ENCODE measurements at regions of chr15 and their contacts with region 1.

Region 1: DNA sequence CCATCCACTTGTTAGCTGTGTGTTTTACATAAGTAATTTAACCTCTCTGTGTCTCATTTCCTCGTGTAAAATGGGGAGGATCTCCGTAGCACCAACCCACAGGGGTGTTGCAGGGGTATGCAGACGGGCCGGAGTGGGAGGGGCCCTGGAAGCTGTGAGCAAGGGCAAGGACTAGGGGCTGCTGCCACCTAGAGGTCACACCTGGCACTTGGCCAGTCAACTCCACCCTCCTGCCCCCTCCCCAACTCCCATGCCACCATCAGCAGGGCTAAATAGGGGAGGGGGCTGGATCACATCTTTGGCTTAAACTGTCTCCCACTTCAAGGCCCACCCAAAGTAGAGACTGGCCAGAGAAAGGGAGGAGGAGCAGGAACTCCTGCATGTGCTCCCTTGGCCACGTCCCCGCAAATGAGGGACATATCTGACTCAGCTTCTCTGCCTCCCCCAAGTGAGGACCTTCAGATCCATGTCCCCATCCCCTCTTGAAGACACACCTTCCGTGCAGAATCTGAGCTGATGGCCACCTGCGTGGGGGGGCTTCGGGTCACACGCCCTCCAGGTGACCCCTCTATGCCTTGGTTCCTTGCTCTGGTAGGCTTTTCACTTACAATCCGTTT is 2.6 kb downstream of the CCDC9B start:
- DNase-seq: peak; percentile 95
- H3K4me3 ChIP-seq: peak overlapping the region; percentile 51 to 77; a peak in 2 of 4 replicates
- H3K27ac ChIP-seq: peak overlapping the region; percentile 96 to 98; a peak in 3 of 4 replicates
- H3K4me1 ChIP-seq: peaks cover 56 to 62% of the 10 kb centered on the region in 2 experiments; a peak in 3 of 4 replicates
- H3K27me3 ChIP-seq: no peaks in the 10 kb centered on the region
- CTCF ChIP-seq: peak; percentile 89
- EP300 ChIP-seq: no peak
- RAD21 ChIP-seq: peak; percentile 81

Region 2: GRCh38 chr15:40323239-40323952 is 14.8 kb before region 1 on chr15 and contains the start of gene INAFM2:
- CTCF ChIA-PET with region 1: interaction called, 2,194 read pairs
- POLR2A ChIA-PET with region 1: interaction called, 10 read pairs
- DNase-seq: peak; percentile 98
- H3K4me3 ChIP-seq: peak within 1 kb of the TSS; percentile 70 to 73
- H3K27ac ChIP-seq: peak within 1 kb of the TSS in 1 of 2 experiments; percentile 43; a peak in 1 of 4 replicates
- H3K4me1 ChIP-seq: peaks cover 20 to 23% of the 10 kb centered on the region in 2 experiments; a peak in 3 of 4 replicates
- H3K27me3 ChIP-seq: no peaks in the 10 kb centered on the region
- CTCF ChIP-seq: peak; percentile 60
- EP300 ChIP-seq: no peak
- RAD21 ChIP-seq: peak; percentile 20
- polyA plus RNA-seq, gene INAFM2: 7.8 and 9.8 TPM in 2 replicates

Region 3: DNA sequence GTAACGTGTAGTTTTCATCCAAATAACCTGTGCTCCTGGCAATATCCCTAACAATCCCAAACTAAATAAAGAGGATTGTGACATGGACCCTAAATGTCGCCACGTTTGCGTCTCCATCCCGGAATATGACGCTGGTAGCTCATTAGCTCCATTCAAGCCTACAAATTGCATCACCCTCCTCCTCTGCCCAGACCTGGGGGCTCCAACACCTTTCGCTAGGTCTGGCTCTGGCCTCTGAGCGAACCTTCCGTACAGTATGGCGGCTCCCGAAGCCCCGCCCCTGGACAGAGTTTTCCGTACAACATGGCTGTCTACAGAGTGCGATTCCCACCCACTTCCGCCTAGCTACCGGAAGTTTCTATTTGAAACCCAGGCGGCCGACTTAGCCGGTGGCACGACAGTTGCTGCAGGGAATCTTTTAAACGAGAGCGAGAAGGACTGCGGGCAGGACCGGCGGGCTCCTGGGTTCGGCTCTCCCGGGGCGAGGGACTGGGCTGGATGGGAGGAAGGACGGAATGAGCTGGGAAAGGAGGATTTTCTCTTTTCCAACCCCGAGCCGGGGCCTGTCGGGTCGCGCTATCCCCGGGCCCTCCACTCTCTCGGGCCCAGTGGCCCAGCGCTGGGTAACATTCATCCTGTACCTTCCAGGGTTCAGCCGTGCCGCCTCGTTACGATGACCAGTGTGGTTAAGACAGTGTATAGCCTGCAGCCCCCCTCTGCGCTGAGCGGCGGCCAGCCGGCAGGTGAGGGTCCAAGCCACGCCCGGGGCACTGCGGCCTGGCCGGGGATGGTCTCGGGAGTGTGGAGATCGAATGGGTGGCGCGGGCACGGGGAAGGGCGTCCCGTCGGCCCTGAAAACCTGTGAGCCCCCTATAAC is 44.7 kb after region 1 on chr15 and contains the start of gene KNSTRN:
- CTCF ChIA-PET with region 1: interaction called, 12 read pairs
- POLR2A ChIA-PET with region 1: interaction called, 7 read pairs
- DNase-seq: peak; percentile 95
- H3K4me3 ChIP-seq: peak within 1 kb of the TSS; percentile 77 to 93
- H3K27ac ChIP-seq: peak within 1 kb of the TSS; percentile 20 to 66; a peak in 3 of 4 replicates
- H3K4me1 ChIP-seq: peaks cover 7 to 17% of the 10 kb centered on the region in 2 experiments; a peak in 3 of 4 replicates
- H3K27me3 ChIP-seq: no peaks in the 10 kb centered on the region
- CTCF ChIP-seq: no peak
- EP300 ChIP-seq: no peak
- RAD21 ChIP-seq: no peak
- polyA plus RNA-seq, gene KNSTRN: 25.5 and 29.5 TPM in 2 replicates

Region 4: GRCh38 chr15:40388946-40389841 is 51.0 kb after region 1 on chr15:
- CTCF ChIA-PET with region 1: interaction called, 14 read pairs
- POLR2A ChIA-PET with region 1: interaction called, 3 read pairs
- DNase-seq: no peak
- H3K4me3 ChIP-seq: no peak overlapping the region
- H3K27ac ChIP-seq: no peak overlapping the region
- H3K4me1 ChIP-seq: peaks cover 3 to 6% of the 10 kb centered on the region in 2 experiments; a peak in 1 of 4 replicates
- H3K27me3 ChIP-seq: no peaks in the 10 kb centered on the region
- CTCF ChIP-seq: no peak
- EP300 ChIP-seq: no peak
- RAD21 ChIP-seq: no peak

Region 5: DNA sequence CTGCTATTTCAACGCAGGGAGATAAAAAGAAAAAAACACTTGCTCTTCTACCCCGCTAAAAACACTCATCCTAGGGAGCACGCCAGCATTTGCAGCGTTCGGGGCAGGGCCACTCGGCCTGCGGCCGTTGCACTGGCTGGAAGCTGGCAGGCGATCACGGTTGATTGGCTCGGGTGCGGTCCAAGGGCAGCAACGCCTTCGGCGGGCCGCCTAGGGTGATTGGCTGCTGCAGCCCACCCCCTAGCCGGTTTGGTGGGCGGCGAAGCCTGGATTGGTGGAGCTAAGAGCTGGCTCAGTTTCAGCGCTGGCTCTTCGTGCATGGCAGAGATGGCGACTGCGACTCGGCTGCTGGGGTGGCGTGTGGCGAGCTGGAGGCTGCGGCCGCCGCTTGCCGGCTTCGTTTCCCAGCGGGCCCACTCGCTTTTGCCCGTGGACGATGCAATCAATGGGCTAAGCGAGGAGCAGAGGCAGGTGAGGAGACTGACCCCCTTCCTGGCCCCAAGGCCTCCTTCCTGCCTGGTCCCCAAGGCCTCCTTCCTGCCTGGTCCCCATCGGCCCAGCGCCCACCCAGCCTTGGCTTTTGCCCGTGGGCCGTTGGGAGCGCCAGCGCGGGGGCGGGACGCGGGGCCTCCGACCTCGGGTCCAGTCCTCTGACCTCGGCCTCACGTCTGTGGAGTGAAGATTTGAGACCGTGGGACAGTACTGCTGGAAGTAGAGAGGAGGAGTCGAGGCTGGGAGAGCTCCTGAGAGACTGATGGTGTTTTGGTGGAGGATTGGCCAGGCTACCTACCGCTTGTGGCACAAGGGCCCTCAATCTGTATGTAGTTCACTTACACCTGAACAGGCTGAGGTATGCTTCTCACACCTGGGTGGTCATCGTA is 67.6 kb after region 1 on chr15 and contains the start of gene IVD:
- CTCF ChIA-PET with region 1: interaction called, 21 read pairs
- POLR2A ChIA-PET with region 1: interaction called, 22 read pairs
- DNase-seq: peak; percentile 100
- H3K4me3 ChIP-seq: peak within 1 kb of the TSS; percentile 82 to 99
- H3K27ac ChIP-seq: peak within 1 kb of the TSS; percentile 44 to 80
- H3K4me1 ChIP-seq: peaks cover 9 to 13% of the 10 kb centered on the region in 2 experiments; a peak in 1 of 4 replicates
- H3K27me3 ChIP-seq: no peaks in the 10 kb centered on the region
- CTCF ChIP-seq: no peak
- EP300 ChIP-seq: no peak
- RAD21 ChIP-seq: 0 out of 2 replicates have a peak, but pooled peaks have one; percentile 8
- polyA plus RNA-seq, gene IVD: 54.2 and 73.8 TPM in 2 replicates